Dorsolateral prefrontal cortex (tissue), 120 donors: ENCODE measurements at regions of chr3 and their contacts with region 1.

Region 1: GRCh38 chr3:169348929-169349613 is 314.4 kb downstream of the MECOM start:
- DNase-seq: no peak
- H3K4me3 ChIP-seq: no peak overlapping the region
- H3K27ac ChIP-seq: no peak overlapping the region
- H3K27me3 ChIP-seq: peaks cover 0 to 43% (median 8%) of the 10 kb centered on the region in 45 donors
- CTCF ChIP-seq: no peak

Region 2: GRCh38 chr3:169311860-169312259 is 37.2 kb before region 1 on chr3:
- intact Hi-C with region 1: loop called in 1 of 2 experiments (anchors 2 kb)
- DNase-seq: no peak
- H3K4me3 ChIP-seq: no peak overlapping the region
- H3K27ac ChIP-seq: no peak overlapping the region
- H3K27me3 ChIP-seq: peaks cover 0 to 12% (median 0%) of the 10 kb centered on the region in 45 donors
- CTCF ChIP-seq: no peak